ENCODE measurements at regions of chr18 and their contacts with region 1.

Region 1: GRCh38 chr18:55422456-55423180 is 165.4 kb downstream of the TCF4 start:
- DNase-seq: peak; percentile 61 to 80 (median 77)
- ATAC-seq: peak; percentile 64 to 67
- H3K4me3 ChIP-seq: peak overlapping the region; percentile 39
- H3K27ac ChIP-seq: peak overlapping the region; percentile 82
- H3K4me1 ChIP-seq: no peaks in the 10 kb centered on the region
- H3K27me3 ChIP-seq: no peaks in the 10 kb centered on the region

Region 2: GRCh38 chr18:55477499-55477859 is 54.9 kb after region 1 on chr18:
- intact Hi-C with region 1: loop called in 1 of 4 experiments (anchors 5 kb)
- DNase-seq: peak in 1 of 3 donors; percentile 60
- ATAC-seq: peak; percentile 82 to 87
- H3K4me3 ChIP-seq: peak overlapping the region; percentile 68
- H3K27ac ChIP-seq: peak overlapping the region; percentile 87
- H3K4me1 ChIP-seq: peaks cover 2% of the 10 kb centered on the region
- H3K27me3 ChIP-seq: no peaks in the 10 kb centered on the region

Region 3: DNA sequence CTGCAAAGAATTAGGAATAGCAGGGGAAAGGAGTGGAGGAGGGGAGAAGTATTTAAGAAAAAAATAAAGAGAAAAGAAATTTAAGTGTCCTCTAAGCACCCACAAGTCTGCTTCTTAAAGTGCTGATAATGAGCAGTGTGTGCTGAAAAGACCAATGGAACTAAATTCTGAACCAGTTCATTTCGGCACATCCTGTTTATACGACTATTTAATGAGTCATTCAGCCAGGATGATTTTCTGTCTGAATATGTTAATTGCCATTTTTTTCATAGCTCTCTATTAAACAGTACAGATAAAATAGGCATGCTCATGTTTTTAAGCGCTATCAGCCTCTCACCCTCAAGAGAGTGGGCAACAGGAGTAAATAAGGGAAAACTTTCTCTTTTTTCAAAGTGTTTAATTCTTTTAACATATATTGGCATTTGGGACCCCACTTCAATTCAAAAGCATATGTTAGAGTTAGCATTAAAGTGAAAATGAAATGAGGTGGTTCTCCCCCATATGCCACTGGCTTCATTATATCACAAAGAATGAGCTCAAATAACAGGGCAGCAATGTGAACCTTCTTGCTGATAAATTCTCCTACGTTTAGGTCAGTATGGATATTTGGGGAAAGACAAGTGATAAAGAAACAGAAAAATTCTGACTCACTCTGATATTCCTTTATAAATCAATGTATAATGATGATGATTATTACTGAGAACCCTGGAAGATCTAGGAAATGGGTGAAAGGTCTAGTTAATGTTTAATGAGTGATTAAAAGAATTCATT is 77.9 kb after region 1 on chr18:
- intact Hi-C with region 1: no loop called
- DNase-seq: no peak
- ATAC-seq: peak in 1 of 2 donors; percentile 67
- H3K4me3 ChIP-seq: peak overlapping the region; percentile 32
- H3K27ac ChIP-seq: no peak overlapping the region
- H3K4me1 ChIP-seq: peaks cover 1% of the 10 kb centered on the region
- H3K27me3 ChIP-seq: no peaks in the 10 kb centered on the region

Measured in right cardiac atrium (tissue), 5 donors.